AG04449 (cell line): ENCODE measurements at regions of chr19 and their contacts with region 1.

Region 1: GRCh38 chr19:54448774-54449700 is at the start of gene LENG8:
- DNase-seq: peak; percentile 94
- H3K4me3 ChIP-seq: peak within 1 kb of the TSS; percentile 98
- CTCF ChIP-seq: no peak

Region 2: DNA sequence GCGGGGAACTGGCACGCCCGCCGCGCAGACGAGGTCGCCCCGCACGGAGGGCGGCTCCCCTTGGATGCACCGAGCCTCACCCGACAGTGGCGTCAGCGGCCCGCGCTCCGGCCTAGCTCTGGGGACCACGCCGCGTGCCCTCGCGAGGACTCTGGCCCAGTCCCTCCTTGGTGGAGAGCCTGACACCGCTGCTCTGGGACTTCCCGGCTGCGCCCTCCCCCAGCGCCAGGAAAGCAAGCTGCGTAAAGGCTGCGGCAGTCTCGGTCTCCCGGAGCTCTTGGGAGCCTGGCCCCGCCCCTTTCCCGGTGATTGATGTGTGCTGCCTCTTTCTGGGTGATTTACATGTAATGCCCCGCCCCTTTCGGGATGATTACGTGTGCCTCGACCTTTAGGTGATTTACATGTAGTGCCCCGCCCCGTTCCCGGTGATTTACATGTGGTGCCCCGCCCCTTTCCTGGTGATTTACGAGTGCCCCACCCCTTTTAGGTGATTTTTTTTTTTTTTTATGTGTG is 14.6 kb after region 1 on chr19 and contains the start of gene LENG9:
- CTCF ChIA-PET with region 1: interaction called, 5 read pairs
- POLR2A ChIA-PET with region 1: interaction called, 49 read pairs
- DNase-seq: peak; percentile 91
- H3K4me3 ChIP-seq: peak within 1 kb of the TSS; percentile 63
- CTCF ChIP-seq: no peak

Region 3: DNA sequence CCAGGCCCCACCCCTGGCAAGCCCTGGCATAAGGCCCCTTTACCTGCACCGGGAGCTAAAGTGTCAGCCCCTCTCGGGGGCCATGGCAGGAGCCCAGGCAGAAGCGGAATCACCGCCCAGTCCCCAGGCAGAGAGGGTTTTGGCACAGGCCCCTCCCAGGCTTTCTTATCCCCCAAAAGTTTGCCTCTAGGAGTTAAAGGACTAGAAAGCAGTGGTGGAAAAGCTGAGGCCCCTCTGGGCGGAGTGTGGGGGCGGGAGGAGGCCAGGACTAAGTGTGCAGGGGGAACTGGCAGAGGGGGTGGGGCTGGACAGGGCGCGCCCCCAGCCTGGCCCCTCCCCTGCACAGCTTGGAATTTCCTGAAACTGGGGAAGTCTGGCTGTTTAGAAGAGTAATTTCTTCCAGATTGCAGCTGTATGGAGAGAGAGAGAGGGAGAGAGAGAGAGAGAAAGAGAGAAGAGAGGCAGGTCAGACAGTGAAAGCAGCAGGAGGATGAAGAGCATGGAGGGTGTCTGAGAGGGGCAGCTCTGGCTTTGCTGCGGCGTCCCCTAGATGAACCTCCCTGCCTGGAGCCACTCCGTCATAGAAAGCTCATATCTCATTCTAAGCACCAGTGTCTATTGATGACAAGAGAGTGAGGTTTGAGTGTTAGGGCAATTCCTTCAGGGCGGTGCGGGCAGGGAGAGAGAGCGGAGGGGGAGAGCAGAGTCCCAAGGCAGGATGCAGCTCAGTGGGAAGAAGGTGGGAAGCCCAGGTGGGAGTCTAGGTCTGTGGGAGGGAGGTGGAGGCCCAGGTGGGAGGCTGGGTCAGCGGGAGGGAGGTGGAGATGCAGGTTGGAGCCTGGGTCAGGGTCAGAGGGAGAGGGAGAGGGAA is 24.2 kb after region 1 on chr19 and contains the start of gene CDC42EP5:
- CTCF ChIA-PET with region 1: interaction called, 8 read pairs
- POLR2A ChIA-PET with region 1: interaction called, 12 read pairs
- DNase-seq: peak; percentile 57
- H3K4me3 ChIP-seq: peak within 1 kb of the TSS; percentile 71
- CTCF ChIP-seq: no peak

Region 4: GRCh38 chr19:54517483-54517882 is 68.4 kb after region 1 on chr19:
- CTCF ChIA-PET with region 1: no interaction called
- POLR2A ChIA-PET with region 1: no interaction called
- DNase-seq: no peak
- H3K4me3 ChIP-seq: no peak overlapping the region
- CTCF ChIP-seq: no peak